Caco-2 (cell line): ENCODE measurements at regions of chr10 and their contacts with region 1.

Region 1: DNA sequence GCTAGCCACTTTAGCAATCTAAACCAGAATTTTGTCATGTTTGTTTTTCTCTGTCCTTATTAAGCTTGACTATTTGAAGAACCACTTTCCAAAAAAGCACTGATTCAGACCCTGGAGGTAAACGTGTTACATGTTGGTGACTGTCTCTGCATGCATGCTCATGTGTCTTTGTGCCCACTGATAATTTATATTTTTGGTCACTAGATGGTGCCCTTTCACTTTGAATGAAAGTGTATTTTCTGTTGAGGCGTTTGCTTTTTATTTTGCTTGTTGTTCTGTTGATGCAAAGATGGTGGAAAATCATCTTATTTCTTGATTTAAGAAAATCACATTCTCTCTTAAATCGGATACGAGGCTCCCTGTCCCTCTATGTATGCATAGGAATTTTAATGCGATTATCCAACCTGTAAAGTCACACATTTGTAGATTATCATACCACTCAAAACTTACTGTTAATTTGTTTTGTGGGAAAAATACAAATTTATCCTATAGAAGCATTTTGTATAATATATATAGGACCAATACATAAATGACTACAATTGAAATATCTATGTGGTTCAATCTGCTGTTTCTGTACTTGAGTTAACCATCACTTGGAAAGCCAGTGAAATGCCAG is 269.3 kb downstream of the BICC1 start:
- DNase-seq: peak in 1 of 2 experiments; percentile 78
- H3K4me3 ChIP-seq: no peak overlapping the region
- H3K4me3 Mint-ChIP-seq: no peak overlapping the region
- H3K27ac Mint-ChIP-seq: peak overlapping the region; percentile 60
- H3K4me1 ChIP-seq: peaks cover 31% of the 10 kb centered on the region
- H3K4me1 Mint-ChIP-seq: peaks cover 38% of the 10 kb centered on the region
- H3K27me3 ChIP-seq: no peaks in the 10 kb centered on the region
- H3K27me3 Mint-ChIP-seq: no peaks in the 10 kb centered on the region
- CTCF ChIP-seq: peak; percentile 71 to 83

Region 2: GRCh38 chr10:58555170-58555929 is 226.6 kb before region 1 on chr10:
- CTCF ChIA-PET with region 1: no interaction called
- POLR2A ChIA-PET with region 1: interaction called, 12 read pairs
- intact Hi-C with region 1: no loop called
- DNase-seq: peak; percentile 87 to 90
- H3K4me3 ChIP-seq: no peak overlapping the region
- H3K4me3 Mint-ChIP-seq: peak overlapping the region; percentile 54
- H3K27ac Mint-ChIP-seq: peak overlapping the region; percentile 27
- H3K4me1 ChIP-seq: peaks cover 74% of the 10 kb centered on the region
- H3K4me1 Mint-ChIP-seq: peaks cover 79% of the 10 kb centered on the region
- H3K27me3 ChIP-seq: no peaks in the 10 kb centered on the region
- H3K27me3 Mint-ChIP-seq: no peaks in the 10 kb centered on the region
- CTCF ChIP-seq: no peak

Region 3: DNA sequence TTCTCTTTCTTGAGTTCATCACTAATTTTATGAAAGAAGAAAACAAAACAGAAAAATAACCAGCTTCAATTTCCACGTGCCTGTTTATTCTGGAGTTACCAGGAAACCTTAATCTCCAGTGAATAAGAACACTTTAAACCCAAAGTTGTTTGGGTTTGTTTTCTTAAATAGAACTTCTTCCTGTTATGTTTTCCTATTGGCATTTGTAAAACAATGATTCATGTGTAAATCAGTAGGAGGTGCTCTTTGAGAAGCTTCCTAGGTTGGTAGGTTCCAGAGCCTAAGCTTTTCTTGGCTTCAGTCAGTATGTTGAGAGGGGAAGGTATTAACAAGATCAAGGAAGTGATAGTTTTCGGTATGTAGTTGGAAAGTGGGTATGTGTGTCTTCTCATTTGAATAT is 150.3 kb before region 1 on chr10:
- CTCF ChIA-PET with region 1: no interaction called
- POLR2A ChIA-PET with region 1: no interaction called
- intact Hi-C with region 1: no loop called
- DNase-seq: no peak
- H3K4me3 ChIP-seq: no peak overlapping the region
- H3K4me3 Mint-ChIP-seq: no peak overlapping the region
- H3K27ac Mint-ChIP-seq: no peak overlapping the region
- H3K4me1 ChIP-seq: peaks cover 27% of the 10 kb centered on the region
- H3K4me1 Mint-ChIP-seq: peaks cover 13% of the 10 kb centered on the region
- H3K27me3 ChIP-seq: no peaks in the 10 kb centered on the region
- H3K27me3 Mint-ChIP-seq: no peaks in the 10 kb centered on the region
- CTCF ChIP-seq: no peak

Region 4: GRCh38 chr10:58844680-58845079 is 62.7 kb after region 1 on chr10:
- CTCF ChIA-PET with region 1: no interaction called
- POLR2A ChIA-PET with region 1: no interaction called
- intact Hi-C with region 1: loop called (anchors 2 kb)
- DNase-seq: peak; percentile 71 to 73
- H3K4me3 ChIP-seq: no peak overlapping the region
- H3K4me3 Mint-ChIP-seq: no peak overlapping the region
- H3K27ac Mint-ChIP-seq: peak overlapping the region; percentile 7
- H3K4me1 ChIP-seq: peaks cover 20% of the 10 kb centered on the region
- H3K4me1 Mint-ChIP-seq: peaks cover 30% of the 10 kb centered on the region
- H3K27me3 ChIP-seq: no peaks in the 10 kb centered on the region
- H3K27me3 Mint-ChIP-seq: no peaks in the 10 kb centered on the region
- CTCF ChIP-seq: no peak

Region 5: GRCh38 chr10:58963101-58963534 is 181.1 kb after region 1 on chr10:
- CTCF ChIA-PET with region 1: no interaction called
- POLR2A ChIA-PET with region 1: no interaction called
- intact Hi-C with region 1: no loop called
- DNase-seq: peak in 1 of 2 experiments; percentile 55
- H3K4me3 ChIP-seq: no peak overlapping the region
- H3K4me3 Mint-ChIP-seq: no peak overlapping the region
- H3K27ac Mint-ChIP-seq: no peak overlapping the region
- H3K4me1 ChIP-seq: peaks cover 28% of the 10 kb centered on the region
- H3K4me1 Mint-ChIP-seq: peaks cover 45% of the 10 kb centered on the region
- H3K27me3 ChIP-seq: no peaks in the 10 kb centered on the region
- H3K27me3 Mint-ChIP-seq: no peaks in the 10 kb centered on the region
- CTCF ChIP-seq: peak; percentile 36 to 57

Region 6: GRCh38 chr10:59227136-59227673 is 445.2 kb after region 1 on chr10:
- CTCF ChIA-PET with region 1: no interaction called
- POLR2A ChIA-PET with region 1: no interaction called
- intact Hi-C with region 1: loop called (anchors 2 kb)
- DNase-seq: peak in 1 of 2 experiments; percentile 34
- H3K4me3 ChIP-seq: no peak overlapping the region
- H3K4me3 Mint-ChIP-seq: no peak overlapping the region
- H3K27ac Mint-ChIP-seq: no peak overlapping the region
- H3K4me1 ChIP-seq: peaks cover 16% of the 10 kb centered on the region
- H3K4me1 Mint-ChIP-seq: peaks cover 23% of the 10 kb centered on the region
- H3K27me3 ChIP-seq: no peaks in the 10 kb centered on the region
- H3K27me3 Mint-ChIP-seq: no peaks in the 10 kb centered on the region
- CTCF ChIP-seq: peak in 1 of 2 experiments; percentile 37

Region 7: DNA sequence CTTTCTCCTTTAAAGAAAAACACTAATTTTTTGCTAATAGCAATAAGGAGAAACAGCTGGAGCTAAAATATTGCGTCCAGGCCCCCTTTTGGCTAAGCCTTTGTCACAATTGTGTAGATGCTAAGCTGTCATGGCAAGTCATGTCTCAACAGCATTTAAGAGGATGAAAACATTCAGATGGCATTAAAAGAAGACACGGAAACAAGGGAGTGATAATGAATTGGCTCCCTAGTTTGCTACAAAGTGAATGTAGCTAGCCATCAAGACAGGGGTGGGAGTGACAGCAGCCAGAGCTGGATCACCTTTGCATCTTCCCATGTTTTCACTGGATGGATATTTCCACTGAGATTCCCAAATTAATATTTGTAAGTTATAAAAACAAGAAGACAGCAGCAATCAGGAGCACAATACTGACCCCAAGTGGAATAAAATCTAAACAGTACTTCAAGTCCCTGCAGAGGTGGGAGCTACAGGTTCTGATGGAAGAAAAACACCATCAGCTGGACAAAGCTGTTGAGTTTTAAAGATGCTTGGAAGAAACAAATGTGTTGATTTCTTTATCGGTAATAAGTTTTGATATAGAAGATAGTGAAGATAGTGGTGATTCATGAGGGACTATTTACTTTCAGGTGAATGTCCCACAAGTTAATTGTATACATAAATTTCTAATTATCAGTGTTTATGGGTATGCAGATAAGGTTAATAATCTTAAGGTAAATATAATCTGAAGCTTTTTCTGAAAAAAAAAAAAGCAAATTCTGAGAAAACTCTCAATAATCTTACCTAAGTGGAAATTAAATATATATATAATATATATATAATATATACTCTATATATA is 798.3 kb after region 1 on chr10:
- CTCF ChIA-PET with region 1: interaction called, 4 read pairs
- POLR2A ChIA-PET with region 1: no interaction called
- intact Hi-C with region 1: loop called (anchors 2 kb)
- DNase-seq: peak in 1 of 2 experiments; percentile 55
- H3K4me3 ChIP-seq: no peak overlapping the region
- H3K4me3 Mint-ChIP-seq: no peak overlapping the region
- H3K27ac Mint-ChIP-seq: no peak overlapping the region
- H3K4me1 ChIP-seq: no peaks in the 10 kb centered on the region
- H3K4me1 Mint-ChIP-seq: peaks cover 7% of the 10 kb centered on the region
- H3K27me3 ChIP-seq: no peaks in the 10 kb centered on the region
- H3K27me3 Mint-ChIP-seq: peaks cover 3% of the 10 kb centered on the region
- CTCF ChIP-seq: peak; percentile 79 to 82